ENCODE measurements at regions of chr11 and their contacts with region 1.

Region 1: GRCh38 chr11:59615637-59616395 is at the start of gene OSBP:
- DNase-seq: peak; percentile 99
- ATAC-seq: peak; percentile 91
- H3K4me3 Mint-ChIP-seq: peak within 1 kb of the TSS; percentile 99
- H3K27ac Mint-ChIP-seq: peak within 1 kb of the TSS; percentile 99
- H3K4me1 Mint-ChIP-seq: peaks cover 51% of the 10 kb centered on the region
- H3K27me3 Mint-ChIP-seq: no peaks in the 10 kb centered on the region
- total RNA-seq, gene OSBP: 34.4 to 38.6 TPM

Region 2: DNA sequence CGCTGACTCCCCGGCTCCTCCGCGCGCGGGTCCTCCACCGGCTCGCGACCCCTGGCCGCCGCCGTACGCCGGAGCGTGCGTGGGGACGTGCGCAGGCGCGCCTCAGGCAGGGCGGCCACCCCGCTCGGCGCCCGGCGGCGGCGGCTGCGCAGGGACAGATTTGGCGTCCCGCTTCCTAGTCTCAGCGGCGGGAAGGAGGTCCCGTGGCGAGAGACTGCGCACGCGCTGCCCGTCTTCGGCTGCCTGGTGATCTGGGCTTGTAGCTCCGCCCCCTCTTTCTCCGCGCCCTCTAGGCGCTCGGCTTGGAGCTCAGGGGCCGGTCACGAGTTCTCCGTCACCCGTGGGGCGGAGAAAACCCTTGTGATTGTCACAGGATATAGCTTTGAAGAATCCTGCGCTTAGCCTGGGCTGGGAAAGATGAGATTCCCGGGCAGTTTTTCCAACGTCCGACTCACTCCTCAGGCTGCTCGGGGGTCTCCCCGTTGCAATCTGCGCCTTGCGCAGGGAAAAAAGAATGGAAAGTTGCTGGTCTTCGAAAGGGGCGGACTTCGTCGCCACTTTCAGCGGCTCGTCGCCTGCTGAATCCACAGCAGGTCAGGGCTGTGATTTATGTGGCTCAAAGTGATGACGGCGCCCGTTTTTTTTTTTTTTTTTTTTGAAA is 53.3 kb after region 1 on chr11 and contains the start of gene PATL1:
- CTCF ChIA-PET with region 1: interaction called, 4 read pairs
- POLR2A ChIA-PET with region 1: interaction called, 30 read pairs
- DNase-seq: peak; percentile 100
- ATAC-seq: peak; percentile 95
- H3K4me3 Mint-ChIP-seq: peak within 1 kb of the TSS; percentile 86
- H3K27ac Mint-ChIP-seq: peak within 1 kb of the TSS; percentile 97
- H3K4me1 Mint-ChIP-seq: peaks cover 38% of the 10 kb centered on the region
- H3K27me3 Mint-ChIP-seq: no peaks in the 10 kb centered on the region
- total RNA-seq, gene PATL1: 47.8 to 49.9 TPM

Measured in activated CD8-positive, alpha-beta T cell treated with anti-CD3 and anti-CD28 coated beads, Interleukin-2, amount 10 ng/mL, durations not matched to agents 7 days and 5 days (primary cell).